ENCODE measurements at regions of chr11 and their contacts with region 1.

Region 1: DNA sequence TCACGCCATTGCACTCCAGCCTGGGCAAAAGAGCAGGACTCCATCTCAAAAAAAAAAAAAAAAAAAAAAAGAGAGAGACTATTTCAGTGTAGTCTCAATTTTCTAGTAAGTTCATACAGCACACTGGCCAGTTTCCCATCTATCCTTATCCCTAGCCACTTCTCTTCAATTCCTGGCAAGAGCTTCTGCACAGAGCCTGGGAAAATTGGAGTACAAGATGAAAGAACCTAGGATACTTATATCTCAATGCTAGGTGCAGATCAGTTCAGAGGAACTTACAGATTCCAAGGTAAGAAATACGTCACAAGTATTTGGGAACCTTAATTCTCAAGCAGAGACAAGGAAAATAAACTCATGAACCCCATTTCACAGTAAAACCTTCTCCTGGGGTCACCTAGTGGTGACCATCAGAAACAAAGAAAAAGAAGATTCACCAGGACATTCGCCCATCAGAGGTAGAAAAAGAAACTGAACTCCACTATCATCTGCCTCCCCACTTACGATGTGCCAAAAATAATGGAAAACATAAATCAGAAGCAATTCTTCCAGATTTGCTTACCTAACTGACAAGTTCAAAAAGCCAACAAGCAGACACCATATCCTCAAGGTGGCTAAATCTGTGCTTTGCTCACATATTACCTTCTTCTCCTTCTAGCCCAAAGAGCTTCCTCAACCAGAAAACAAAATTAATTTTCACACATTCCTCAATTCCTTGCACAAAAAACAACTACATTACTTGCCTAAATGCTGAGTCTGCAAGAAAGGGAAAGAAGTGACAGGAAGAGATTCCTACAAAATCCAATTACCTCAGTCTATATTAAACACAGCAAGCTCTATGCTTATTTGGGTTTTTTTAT is 4.9 kb downstream of the DENND5A start:
- DNase-seq: no peak
- H3K4me3 ChIP-seq: no peak overlapping the region
- H3K4me3 Mint-ChIP-seq: no peak overlapping the region
- H3K27ac Mint-ChIP-seq: no peak overlapping the region
- H3K4me1 ChIP-seq: peaks cover 17% of the 10 kb centered on the region; the same call in 1 of the 2 replicates
- H3K4me1 Mint-ChIP-seq: peaks cover 22% of the 10 kb centered on the region
- H3K27me3 ChIP-seq: no peaks in the 10 kb centered on the region
- H3K27me3 Mint-ChIP-seq: no peaks in the 10 kb centered on the region
- CTCF ChIP-seq: peak; percentile 39 to 49

Region 2: DNA sequence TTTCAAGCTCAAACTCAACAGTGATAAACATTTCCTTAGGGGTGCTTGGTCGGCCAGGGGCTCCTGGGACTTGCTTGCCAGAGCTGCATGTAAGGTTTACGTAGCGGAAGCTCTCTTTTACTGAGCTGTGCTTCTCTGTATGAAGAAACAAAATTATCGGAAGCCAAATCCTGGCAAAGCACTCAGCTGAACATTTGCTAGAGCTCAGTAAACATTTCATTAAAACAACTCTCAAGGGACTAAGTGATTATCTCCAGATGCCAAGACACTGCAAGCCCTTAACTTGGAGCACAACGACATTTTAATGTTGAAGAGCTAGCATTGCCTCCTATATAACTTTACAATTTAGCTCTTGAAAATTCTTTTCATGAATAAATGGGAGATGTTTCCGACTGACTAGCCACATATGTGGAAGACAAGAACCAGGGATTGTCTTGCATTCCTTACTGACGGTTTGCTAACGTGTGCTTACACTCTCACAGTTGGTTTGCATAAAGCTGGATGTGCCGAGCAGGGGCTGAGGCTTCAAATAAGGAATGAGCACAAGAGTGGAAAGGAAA is 212.2 kb before region 1 on chr11:
- CTCF ChIA-PET with region 1: interaction called, 10 read pairs
- POLR2A ChIA-PET with region 1: no interaction called
- intact Hi-C with region 1: no loop called
- DNase-seq: no peak
- H3K4me3 ChIP-seq: no peak overlapping the region
- H3K4me3 Mint-ChIP-seq: no peak overlapping the region
- H3K27ac Mint-ChIP-seq: no peak overlapping the region
- H3K4me1 ChIP-seq: no peaks in the 10 kb centered on the region
- H3K4me1 Mint-ChIP-seq: no peaks in the 10 kb centered on the region
- H3K27me3 ChIP-seq: no peaks in the 10 kb centered on the region
- H3K27me3 Mint-ChIP-seq: no peaks in the 10 kb centered on the region
- CTCF ChIP-seq: no peak

Region 3: GRCh38 chr11:9203691-9204311 is 56.4 kb before region 1 on chr11:
- CTCF ChIA-PET with region 1: interaction called, 6 read pairs
- POLR2A ChIA-PET with region 1: no interaction called
- intact Hi-C with region 1: loop called (anchors 1 kb)
- DNase-seq: peak in 1 of 2 experiments; percentile 48
- H3K4me3 ChIP-seq: no peak overlapping the region
- H3K4me3 Mint-ChIP-seq: no peak overlapping the region
- H3K27ac Mint-ChIP-seq: no peak overlapping the region
- H3K4me1 ChIP-seq: peaks cover 8% of the 10 kb centered on the region; the same call in 1 of the 2 replicates
- H3K4me1 Mint-ChIP-seq: peaks cover 2% of the 10 kb centered on the region
- H3K27me3 ChIP-seq: no peaks in the 10 kb centered on the region
- H3K27me3 Mint-ChIP-seq: no peaks in the 10 kb centered on the region
- CTCF ChIP-seq: peak; percentile 45 to 53

Region 4: GRCh38 chr11:9231848-9232177 is 28.4 kb before region 1 on chr11:
- CTCF ChIA-PET with region 1: no interaction called
- POLR2A ChIA-PET with region 1: interaction called, 10 read pairs
- intact Hi-C with region 1: no loop called
- DNase-seq: no peak
- H3K4me3 ChIP-seq: no peak overlapping the region
- H3K4me3 Mint-ChIP-seq: no peak overlapping the region
- H3K27ac Mint-ChIP-seq: no peak overlapping the region
- H3K4me1 ChIP-seq: peaks cover 34% of the 10 kb centered on the region
- H3K4me1 Mint-ChIP-seq: peaks cover 28% of the 10 kb centered on the region
- H3K27me3 ChIP-seq: no peaks in the 10 kb centered on the region
- H3K27me3 Mint-ChIP-seq: no peaks in the 10 kb centered on the region
- CTCF ChIP-seq: no peak